ENCODE measurements at regions of chr1 and their contacts with region 1.

Region 1: GRCh38 chr1:150072959-150073358 is 5.4 kb downstream of the VPS45 start:
- DNase-seq: peak; percentile 55
- ATAC-seq: peak; percentile 72
- H3K4me3 ChIP-seq: no peak overlapping the region
- H3K27ac ChIP-seq: no peak overlapping the region
- H3K4me1 ChIP-seq: no peaks in the 10 kb centered on the region
- H3K27me3 ChIP-seq: no peaks in the 10 kb centered on the region
- CTCF ChIP-seq: peak; percentile 64
- POLR2A ChIP-seq: no peak
- RAD21 ChIP-seq: peak; percentile 59

Region 2: GRCh38 chr1:150168960-150169601 is 96.1 kb after region 1 on chr1:
- CTCF ChIA-PET with region 1: interaction called, 9 read pairs
- POLR2A ChIA-PET with region 1: no interaction called
- dilution Hi-C with region 1: no loop called
- in situ Hi-C with region 1: loop called (anchors 5 kb)
- intact Hi-C with region 1: loop called (anchors 1 kb)
- DNase-seq: peak; percentile 63
- ATAC-seq: peak; percentile 65
- H3K4me3 ChIP-seq: no peak overlapping the region
- H3K27ac ChIP-seq: no peak overlapping the region
- H3K4me1 ChIP-seq: peaks cover 6% of the 10 kb centered on the region
- H3K27me3 ChIP-seq: no peaks in the 10 kb centered on the region
- CTCF ChIP-seq: peak; percentile 93
- POLR2A ChIP-seq: no peak
- RAD21 ChIP-seq: peak; percentile 93

Region 3: DNA sequence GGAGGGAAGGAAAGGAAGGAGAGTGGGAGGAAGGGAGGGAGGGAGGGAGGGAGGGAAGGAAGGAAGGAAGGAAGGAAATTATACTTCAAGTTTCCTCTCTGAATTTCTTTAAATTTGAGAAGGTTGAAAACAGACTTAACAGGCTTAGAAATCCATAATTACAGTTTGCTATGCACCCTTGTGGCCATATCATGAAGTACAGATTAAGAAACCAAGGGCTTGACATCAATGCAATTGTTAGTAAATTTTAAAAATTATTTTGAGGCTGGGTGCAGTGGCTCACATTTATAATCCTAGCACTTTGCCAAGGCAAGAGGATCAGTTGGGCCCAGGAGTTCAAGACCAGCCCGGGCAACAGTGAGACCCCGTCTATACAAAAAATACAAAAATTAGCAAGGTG is 148.6 kb after region 1 on chr1:
- CTCF ChIA-PET with region 1: no interaction called
- POLR2A ChIA-PET with region 1: no interaction called
- dilution Hi-C with region 1: no loop called
- in situ Hi-C with region 1: no loop called
- intact Hi-C with region 1: loop called (anchors 5 kb)
- DNase-seq: peak; percentile 46
- ATAC-seq: peak; percentile 77
- H3K4me3 ChIP-seq: no peak overlapping the region
- H3K27ac ChIP-seq: no peak overlapping the region
- H3K4me1 ChIP-seq: no peaks in the 10 kb centered on the region
- H3K27me3 ChIP-seq: no peaks in the 10 kb centered on the region
- CTCF ChIP-seq: peak; percentile 55
- POLR2A ChIP-seq: no peak
- RAD21 ChIP-seq: peak; percentile 42; the same call in 1 of the 2 replicates